Sciatic nerve (tissue), 2 donors: ENCODE measurements at regions of chr18 and their contacts with region 1.

Region 1: GRCh38 chr18:57803103-57803969 is at the start of gene ATP8B1:
- DNase-seq: peak; percentile 75
- ATAC-seq: peak; percentile 82
- total RNA-seq, gene ATP8B1: 10.5 TPM

Region 2: DNA sequence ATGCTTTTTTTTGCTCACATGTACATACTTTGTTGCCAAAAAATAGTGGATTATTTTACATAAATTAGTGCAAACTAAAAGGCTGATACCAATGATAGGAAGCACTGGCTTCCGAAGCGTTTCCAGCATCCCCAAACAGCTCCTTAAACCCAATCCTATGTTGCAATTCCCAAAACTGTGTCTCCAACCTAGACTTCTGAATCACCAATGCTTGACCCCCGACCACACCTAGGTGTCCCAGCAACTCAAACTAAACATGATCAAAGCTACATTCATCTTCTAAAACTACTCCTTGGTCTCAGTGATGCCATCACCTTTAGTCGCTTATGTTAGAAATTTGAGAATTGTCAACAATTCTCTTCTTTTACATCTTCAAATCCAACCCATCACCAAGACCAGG is 13.6 kb before region 1 on chr18:
- intact Hi-C with region 1: loop called (anchors 1 kb)
- DNase-seq: no peak
- ATAC-seq: peak; percentile 8